GM10248 (cell line): ENCODE measurements at regions of chr11 and their contacts with region 1.

Region 1: GRCh38 chr11:1882519-1883238 is 9.0 kb downstream of the PRR33 start:
- DNase-seq: peak; percentile 90
- CTCF ChIP-seq: peak; percentile 96

Region 2: GRCh38 chr11:1832211-1832919 is 50.3 kb before region 1 on chr11:
- CTCF ChIA-PET with region 1: interaction called, 14 read pairs
- POLR2A ChIA-PET with region 1: no interaction called
- DNase-seq: peak; percentile 87
- CTCF ChIP-seq: peak; percentile 83

Region 3: DNA sequence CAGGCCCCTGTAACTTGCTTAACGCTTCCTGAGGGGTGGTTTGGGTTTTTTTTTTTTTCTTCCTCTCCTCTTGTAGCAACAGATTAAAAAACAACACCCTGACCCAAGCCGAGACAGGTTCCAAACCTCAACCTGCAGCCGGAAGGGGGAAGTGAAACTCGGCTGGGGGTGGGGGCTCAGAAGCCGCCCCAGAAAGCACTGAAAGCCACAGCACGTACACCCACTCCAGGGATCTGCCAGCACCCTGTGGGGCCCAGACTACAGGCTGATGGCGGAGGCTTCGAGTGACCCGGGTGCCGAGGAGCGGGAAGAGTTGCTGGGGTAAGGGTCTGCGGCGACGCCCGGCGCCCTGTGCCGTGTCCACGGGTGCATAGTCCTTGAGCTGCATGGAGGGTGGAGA is 29.8 kb before region 1 on chr11 and contains the start of gene LSP1:
- CTCF ChIA-PET with region 1: interaction called, 38 read pairs
- POLR2A ChIA-PET with region 1: no interaction called
- DNase-seq: peak; percentile 93
- CTCF ChIP-seq: no peak

Region 4: GRCh38 chr11:1896923-1897322 is 14.2 kb after region 1 on chr11:
- CTCF ChIA-PET with region 1: interaction called, 17 read pairs
- POLR2A ChIA-PET with region 1: interaction called, 3 read pairs
- DNase-seq: peak; percentile 66
- CTCF ChIP-seq: peak; percentile 37

Region 5: DNA sequence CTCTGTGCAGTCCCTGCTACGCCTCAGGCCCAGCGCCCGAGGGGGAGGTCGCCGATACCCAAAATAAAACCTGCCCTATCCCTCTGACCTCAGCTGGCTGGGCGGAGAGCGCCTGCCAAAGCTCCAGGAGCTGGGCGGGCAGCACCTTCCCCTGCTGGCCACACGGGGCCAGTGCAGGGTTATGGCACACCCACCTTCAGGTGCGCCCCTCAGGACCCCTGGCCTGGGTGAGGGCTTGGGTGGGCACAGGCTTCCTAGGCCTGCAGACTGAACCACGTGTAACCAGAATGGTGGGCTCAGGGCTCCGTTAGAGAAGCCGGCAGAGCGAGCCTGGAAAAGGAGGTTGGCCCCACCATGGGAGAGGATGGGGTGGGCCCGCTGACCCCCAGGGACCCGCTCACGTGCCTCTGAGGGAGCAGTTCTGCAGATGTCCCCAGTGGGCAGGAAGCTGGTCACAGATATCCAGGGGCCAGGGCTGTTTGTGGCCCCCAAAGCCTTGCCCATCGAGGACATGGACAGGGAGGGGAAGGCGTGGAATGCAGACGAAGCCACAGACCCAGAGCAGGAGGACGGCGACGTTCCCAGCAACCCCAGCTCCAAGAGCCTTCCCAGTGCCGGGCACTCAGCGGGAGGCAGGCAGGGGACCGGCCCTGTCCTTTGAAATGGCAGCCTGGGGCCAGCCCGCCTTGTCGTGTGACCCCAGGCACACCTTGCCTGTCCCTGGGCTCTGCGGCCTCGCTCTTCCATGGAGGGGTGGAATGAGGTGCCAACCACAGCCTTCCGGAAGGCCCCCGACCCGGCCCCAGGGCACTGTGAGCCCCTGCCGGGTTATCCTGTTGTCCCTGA is 35.2 kb after region 1 on chr11:
- CTCF ChIA-PET with region 1: interaction called, 28 read pairs
- POLR2A ChIA-PET with region 1: interaction called, 3 read pairs
- DNase-seq: no peak
- CTCF ChIP-seq: peak; percentile 48

Region 6: DNA sequence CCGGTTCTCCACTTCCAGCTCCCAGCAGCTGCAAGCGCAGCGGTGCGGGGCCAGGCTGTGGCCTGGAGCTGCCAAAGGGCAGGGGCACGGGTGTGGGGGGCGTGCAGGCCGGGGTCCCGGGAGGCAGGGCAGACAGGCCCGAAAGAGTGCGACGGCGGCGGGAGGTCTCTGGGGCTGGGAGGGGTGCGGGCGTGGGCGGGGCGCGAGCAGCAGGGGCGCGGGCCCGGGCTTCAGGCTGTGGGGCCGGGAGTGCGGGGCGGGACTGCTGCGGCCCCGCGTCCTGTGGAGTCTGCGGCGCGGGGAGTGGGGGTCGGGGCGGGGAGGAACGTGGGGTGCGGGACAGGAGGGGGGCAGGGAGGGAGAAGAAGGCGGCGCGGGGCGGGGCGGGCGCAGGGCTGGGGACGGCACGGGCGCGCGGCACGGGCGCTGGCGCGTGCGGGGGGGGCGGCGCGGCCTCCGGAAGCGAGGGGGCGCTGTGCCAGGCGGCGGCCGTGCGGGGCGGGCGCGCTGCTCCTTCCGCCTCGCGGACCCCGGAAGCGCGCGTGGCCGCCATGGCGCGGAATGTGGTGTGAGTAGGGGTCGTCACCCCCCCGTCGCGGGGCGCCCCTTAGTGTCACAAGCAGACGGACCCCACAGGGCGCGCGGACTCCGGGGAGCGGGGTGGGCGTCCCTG is 64.3 kb after region 1 on chr11 and contains the start of gene MRPL23:
- CTCF ChIA-PET with region 1: interaction called, 22 read pairs
- POLR2A ChIA-PET with region 1: no interaction called
- DNase-seq: no peak
- CTCF ChIP-seq: no peak